Posterior vena cava (tissue), 2 donors: ENCODE measurements at regions of chr10 and their contacts with region 1.

Region 1: GRCh38 chr10:75187961-75188426 is 22.6 kb upstream of the VDAC2 start:
- DNase-seq: no peak

Region 2: GRCh38 chr10:75137533-75138438 is 50.2 kb before region 1 on chr10:
- intact Hi-C with region 1: loop called in 1 of 2 experiments (anchors 10 kb)
- DNase-seq: no peak

Region 3: GRCh38 chr10:75401569-75402485 is 213.8 kb after region 1 on chr10 and contains the start of gene ZNF503:
- intact Hi-C with region 1: no loop called
- DNase-seq: peak; percentile 99
- total RNA-seq, gene ZNF503: 27.9 to 36.0 TPM